A673 (cell line): ENCODE measurements at regions of chr3 and their contacts with region 1.

Region 1: GRCh38 chr3:119293871-119294695 is at the start of gene ARHGAP31:
- DNase-seq: peak; percentile 83
- H3K4me3 ChIP-seq: peak within 1 kb of the TSS; percentile 66
- H3K27ac ChIP-seq: peak within 1 kb of the TSS; percentile 70
- H3K4me1 ChIP-seq: peaks cover 9% of the 10 kb centered on the region
- H3K27me3 ChIP-seq: no peaks in the 10 kb centered on the region
- CTCF ChIP-seq: no peak
- total RNA-seq, gene ARHGAP31: 7.8 and 12.0 TPM in 2 replicates

Region 2: DNA sequence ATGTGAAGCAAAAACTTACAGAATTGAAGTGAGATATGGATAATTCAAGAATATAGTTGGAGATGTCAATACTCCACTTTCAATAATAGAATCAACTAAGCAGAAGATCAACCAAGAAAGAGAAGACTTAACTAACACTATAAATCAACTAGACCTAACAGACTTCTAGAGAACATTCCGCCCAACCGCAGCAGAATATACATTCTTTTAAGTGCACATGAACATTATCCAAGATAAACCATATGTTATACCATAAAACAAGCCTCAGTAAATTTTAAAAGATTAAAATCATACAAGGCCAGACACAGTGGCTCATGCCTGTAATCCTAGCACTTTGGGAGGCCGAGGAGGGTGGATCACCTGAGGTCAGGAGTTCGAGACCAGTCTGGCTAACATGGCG is 153.6 kb before region 1 on chr3:
- CTCF ChIA-PET with region 1: no interaction called
- POLR2A ChIA-PET with region 1: no interaction called
- intact Hi-C with region 1: no loop called
- DNase-seq: no peak
- H3K4me3 ChIP-seq: no peak overlapping the region
- H3K27ac ChIP-seq: no peak overlapping the region
- H3K4me1 ChIP-seq: no peaks in the 10 kb centered on the region
- H3K27me3 ChIP-seq: no peaks in the 10 kb centered on the region
- CTCF ChIP-seq: no peak

Region 3: GRCh38 chr3:119219069-119219468 is 75.0 kb before region 1 on chr3:
- CTCF ChIA-PET with region 1: no interaction called
- POLR2A ChIA-PET with region 1: no interaction called
- intact Hi-C with region 1: no loop called
- DNase-seq: no peak
- H3K4me3 ChIP-seq: no peak overlapping the region
- H3K27ac ChIP-seq: no peak overlapping the region
- H3K4me1 ChIP-seq: no peaks in the 10 kb centered on the region
- H3K27me3 ChIP-seq: no peaks in the 10 kb centered on the region
- CTCF ChIP-seq: no peak

Region 4: DNA sequence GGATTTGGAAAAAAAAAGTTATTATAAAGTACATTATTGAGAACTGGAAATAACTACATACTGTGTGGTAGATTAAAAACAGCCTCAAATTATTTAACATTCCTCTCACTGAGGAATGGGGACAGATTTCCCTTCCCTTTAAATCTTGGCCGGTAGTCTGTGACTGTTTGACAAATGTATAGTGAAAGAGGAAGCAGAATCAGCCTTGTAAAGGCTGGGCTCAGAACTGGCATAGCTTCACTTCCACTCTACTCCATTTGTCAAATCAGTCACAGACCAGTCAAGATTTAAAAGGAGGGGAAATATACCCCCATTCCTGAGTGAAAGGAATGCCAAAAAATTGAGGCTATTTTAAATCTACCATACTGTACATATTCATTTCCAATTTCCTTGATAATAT is 35.2 kb before region 1 on chr3:
- CTCF ChIA-PET with region 1: no interaction called
- POLR2A ChIA-PET with region 1: no interaction called
- intact Hi-C with region 1: no loop called
- DNase-seq: no peak
- H3K4me3 ChIP-seq: no peak overlapping the region
- H3K27ac ChIP-seq: no peak overlapping the region
- H3K4me1 ChIP-seq: no peaks in the 10 kb centered on the region
- H3K27me3 ChIP-seq: no peaks in the 10 kb centered on the region
- CTCF ChIP-seq: no peak

Region 5: DNA sequence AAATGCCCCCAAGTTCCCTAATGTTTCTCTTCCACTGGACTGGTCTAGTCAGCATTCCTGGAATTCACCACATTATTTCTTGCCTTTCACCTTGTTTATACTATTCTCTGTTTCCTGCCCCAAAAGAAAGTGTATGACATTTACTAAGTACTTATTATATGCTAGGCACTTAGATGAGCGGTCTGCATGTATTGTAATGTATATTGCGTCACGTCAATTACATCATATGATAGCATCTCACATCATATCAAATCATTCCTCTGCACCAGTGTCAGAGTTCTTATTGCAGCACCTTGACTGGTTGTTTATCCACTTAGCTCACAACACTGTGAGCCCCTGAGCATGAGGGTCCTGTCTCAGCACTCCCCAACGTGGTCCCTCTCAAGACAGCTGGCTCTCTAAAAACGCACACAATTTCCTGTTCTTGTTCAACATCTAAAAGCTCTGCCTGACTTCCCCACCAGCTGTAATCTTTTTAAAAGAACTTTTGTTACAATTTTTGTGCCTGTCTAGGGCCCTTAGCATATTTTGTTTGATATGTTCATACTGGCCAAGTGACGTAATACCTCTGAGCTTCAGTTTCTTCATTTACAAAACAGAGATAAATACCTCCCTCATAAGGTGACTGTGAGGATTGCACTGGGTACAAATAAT is 58.9 kb after region 1 on chr3:
- CTCF ChIA-PET with region 1: interaction called, 7 read pairs
- POLR2A ChIA-PET with region 1: no interaction called
- intact Hi-C with region 1: loop called (anchors 5 kb)
- DNase-seq: peak; percentile 58
- H3K4me3 ChIP-seq: no peak overlapping the region
- H3K27ac ChIP-seq: no peak overlapping the region
- H3K4me1 ChIP-seq: peaks cover 31% of the 10 kb centered on the region
- H3K27me3 ChIP-seq: no peaks in the 10 kb centered on the region
- CTCF ChIP-seq: peak; percentile 49

Region 6: DNA sequence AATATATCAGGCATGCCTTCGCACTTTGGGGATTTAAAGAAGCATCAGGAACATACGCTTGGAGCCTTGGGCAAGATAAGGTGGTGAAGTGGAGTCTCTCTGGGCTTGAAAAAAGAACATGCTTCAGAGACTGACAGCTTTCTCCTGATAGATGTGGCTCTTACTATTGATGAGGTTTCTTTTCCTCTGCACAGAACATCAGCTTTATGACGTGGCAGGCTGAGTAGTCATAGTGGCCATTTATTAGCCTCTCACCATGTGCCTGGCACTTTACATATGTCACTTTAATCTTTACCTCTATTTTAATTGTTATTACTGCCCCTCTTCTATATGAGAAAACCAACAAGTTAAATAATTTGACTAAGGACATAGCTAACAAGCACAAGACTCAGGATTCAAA is 1074.1 kb after region 1 on chr3:
- CTCF ChIA-PET with region 1: no interaction called
- POLR2A ChIA-PET with region 1: interaction called, 11 read pairs
- intact Hi-C with region 1: no loop called
- DNase-seq: no peak
- H3K4me3 ChIP-seq: no peak overlapping the region
- H3K27ac ChIP-seq: no peak overlapping the region
- H3K4me1 ChIP-seq: no peaks in the 10 kb centered on the region
- H3K27me3 ChIP-seq: peaks cover 21% of the 10 kb centered on the region
- CTCF ChIP-seq: no peak